A549 (cell line): ENCODE measurements at regions of chr3 and their contacts with region 1.

Region 1: DNA sequence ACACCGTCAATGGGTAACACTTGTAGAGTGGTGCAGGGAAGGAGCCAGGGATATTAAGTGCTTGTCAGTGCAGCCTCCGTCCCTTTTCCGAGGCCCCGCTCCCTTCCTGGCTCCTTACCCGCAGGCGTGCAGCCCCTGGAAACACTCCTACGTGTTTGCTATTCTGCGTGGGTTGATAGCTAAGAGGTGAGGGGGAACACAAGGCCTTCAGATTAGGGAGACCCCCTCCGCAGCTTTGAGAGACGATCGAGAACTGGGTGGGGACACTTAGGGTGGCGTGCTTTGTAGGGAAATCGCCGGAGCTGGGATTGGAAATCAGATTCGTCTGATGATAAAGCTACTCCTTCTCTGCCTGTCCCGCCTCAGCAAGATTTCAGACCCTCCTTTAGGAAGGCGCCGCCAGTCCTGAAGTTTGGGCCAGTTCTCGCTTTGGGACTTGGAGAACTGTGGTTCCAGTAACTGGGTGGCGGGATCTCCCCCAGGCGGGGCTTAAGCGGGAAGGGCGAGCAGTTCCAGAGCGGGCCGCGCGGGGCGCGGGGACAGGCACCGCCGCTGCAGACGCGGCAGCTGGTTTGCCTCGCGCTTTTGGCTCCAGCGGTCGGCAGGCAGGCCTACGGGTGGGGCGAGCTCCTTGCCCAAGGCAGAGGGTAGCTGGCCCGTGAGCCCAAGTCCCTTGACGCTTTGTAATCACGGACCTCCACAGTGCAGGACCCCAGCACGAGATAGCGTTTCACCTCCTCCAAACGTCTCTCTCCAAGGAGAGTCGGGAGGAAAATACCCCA is 8.0 kb upstream of the FAM107A start:
- DNase-seq: peak; percentile 66 to 91
- ATAC-seq: peak; percentile 95 to 99
- H3K4me3 ChIP-seq: peak overlapping the region; percentile 68
- H3K27ac ChIP-seq: peak overlapping the region; percentile 63 to 85; a peak in 5 of 6 replicates
- H3K4me1 ChIP-seq: peaks cover 11% of the 10 kb centered on the region; the same call in 1 of the 3 replicates
- CTCF ChIP-seq: peak; percentile 31; the same call in 2 of the 3 replicates
- EP300 ChIP-seq: no peak
- POLR2A ChIP-seq: no peak
- RAD21 ChIP-seq: peak in 1 of 2 experiments; percentile 17; a peak in 2 of 5 replicates

Region 2: DNA sequence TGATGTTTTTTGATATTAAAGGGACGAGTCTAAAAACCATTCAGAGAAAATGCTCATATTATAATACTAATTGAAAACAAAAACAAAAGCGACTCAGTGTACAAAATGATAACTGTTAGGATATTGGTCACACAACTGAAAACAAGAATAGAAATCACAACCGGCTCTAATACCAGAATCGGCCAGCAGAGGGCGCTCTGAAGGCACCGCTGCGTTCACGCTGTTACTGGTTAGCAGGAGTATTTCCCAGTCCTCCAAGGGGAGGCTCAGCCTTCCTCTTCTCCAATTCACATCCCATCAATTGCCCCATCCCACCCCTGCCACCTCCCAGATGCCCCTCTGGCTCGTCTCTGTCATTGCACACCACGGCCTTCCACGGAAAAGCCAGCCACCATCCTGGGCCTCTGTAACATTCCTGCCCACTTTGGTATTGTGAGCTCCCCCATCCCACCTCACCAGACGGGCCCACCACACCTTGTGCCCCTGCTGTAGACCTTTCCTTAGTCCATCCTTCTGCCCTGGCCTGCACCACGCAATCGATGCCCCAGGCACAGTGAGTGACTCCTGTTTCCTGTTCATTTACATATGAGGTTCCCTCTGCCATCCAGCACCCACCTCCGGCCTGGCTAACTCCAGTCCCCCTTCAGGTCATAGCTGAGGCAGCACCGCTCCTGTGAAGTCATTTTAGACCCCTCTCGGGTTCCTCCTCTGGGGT is 16.5 kb before region 1 on chr3:
- CTCF ChIA-PET with region 1: interaction called, 19 read pairs
- POLR2A ChIA-PET with region 1: no interaction called
- DNase-seq: peak; percentile 33 to 56
- ATAC-seq: peak; percentile 40 to 80; a peak in 4 of 6 replicates
- H3K4me3 ChIP-seq: no peak overlapping the region
- H3K27ac ChIP-seq: 0 out of 6 replicates have a peak overlapping the region, but pooled peaks of 1 of the 2 experiments have one; percentile 18
- H3K4me1 ChIP-seq: peaks cover 16% of the 10 kb centered on the region
- CTCF ChIP-seq: peak; percentile 78
- EP300 ChIP-seq: no peak
- POLR2A ChIP-seq: no peak
- RAD21 ChIP-seq: peak; percentile 60 to 68